Activated CD4-positive, alpha-beta T cell treated with anti-CD3 and anti-CD28 coated beads for 36 hours (primary cell): ENCODE measurements at regions of chr2 and their contacts with region 1.

Region 1: DNA sequence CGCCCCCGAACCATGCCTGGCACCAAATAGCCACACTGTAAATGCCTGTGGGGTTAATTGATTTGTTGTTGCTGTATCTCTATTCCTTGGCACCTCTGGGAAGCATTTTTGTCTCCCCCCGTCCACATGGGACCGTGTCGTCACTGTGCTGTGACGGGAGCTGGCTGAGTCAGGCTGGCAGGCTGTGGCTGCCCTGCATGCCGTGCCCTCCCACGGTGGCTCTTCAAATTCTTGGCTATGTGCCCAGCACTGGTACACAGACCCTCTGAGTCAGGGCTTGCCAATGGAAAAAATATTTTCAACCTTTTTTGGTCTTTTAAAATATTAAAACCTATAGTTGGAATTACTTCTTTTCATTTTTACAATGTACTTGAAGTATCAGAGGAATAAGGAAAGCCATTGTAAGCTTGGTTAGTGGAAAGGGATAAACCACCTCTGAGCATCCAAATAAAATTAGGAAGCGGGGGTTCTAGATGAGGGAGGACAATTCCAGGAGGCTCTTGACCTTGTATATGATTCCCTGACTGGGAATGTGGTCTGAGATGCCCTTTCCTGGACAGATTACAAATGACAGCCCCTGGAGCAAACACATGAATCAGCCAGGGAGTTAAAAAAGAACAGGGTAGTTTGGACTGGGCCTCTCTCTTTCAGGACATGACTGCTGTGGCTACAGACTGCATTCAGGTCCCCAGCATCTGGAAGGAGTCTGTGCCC is 59.4 kb downstream of the DGKD start:
- DNase-seq: peak; percentile 81
- ATAC-seq: peak; percentile 48
- H3K4me3 Mint-ChIP-seq: no peak overlapping the region
- H3K27ac Mint-ChIP-seq: peak overlapping the region; percentile 95
- H3K4me1 Mint-ChIP-seq: peaks cover 89% of the 10 kb centered on the region
- H3K27me3 Mint-ChIP-seq: no peaks in the 10 kb centered on the region

Region 2: DNA sequence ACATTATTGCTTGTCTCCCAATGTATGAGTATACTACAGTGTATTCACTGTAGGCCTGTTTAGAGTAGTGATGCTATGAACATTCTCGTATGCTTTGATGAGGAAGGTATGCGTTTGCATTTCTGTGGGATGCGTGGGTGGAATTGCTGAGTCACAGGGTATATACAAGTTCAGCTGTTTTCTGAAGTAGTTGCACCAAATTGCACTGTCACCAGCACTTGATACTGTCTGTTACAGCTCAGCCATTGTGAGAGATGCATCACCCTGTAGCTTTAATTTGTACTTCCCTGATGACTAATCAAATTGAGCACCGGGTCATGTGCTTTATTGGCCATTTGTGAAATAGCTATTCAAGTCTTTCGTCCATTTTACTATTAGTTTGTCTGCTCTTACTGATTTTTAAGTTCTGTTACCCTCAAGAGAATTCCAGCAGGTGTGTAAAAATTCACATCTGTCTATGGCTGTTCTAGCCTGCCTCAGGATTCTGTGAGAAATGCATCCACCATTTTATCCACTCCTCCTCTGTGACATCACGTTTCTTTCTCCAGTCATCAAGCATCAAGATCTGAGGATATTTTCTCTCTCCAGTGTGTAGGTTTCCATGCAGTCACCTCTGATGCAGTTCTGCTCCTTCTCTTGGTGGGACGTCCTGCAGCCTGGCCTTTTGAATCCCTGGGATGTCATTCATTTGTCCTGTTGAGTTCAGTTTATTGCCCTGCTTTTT is 13.1 kb after region 1 on chr2:
- CTCF ChIA-PET with region 1: interaction called, 16 read pairs
- POLR2A ChIA-PET with region 1: interaction called, 3 read pairs
- intact Hi-C with region 1: loop called (anchors 1 kb)
- DNase-seq: peak; percentile 89
- ATAC-seq: peak; percentile 83
- H3K4me3 Mint-ChIP-seq: no peak overlapping the region
- H3K27ac Mint-ChIP-seq: peak overlapping the region; percentile 73
- H3K4me1 Mint-ChIP-seq: peaks cover 79% of the 10 kb centered on the region
- H3K27me3 Mint-ChIP-seq: no peaks in the 10 kb centered on the region

Region 3: DNA sequence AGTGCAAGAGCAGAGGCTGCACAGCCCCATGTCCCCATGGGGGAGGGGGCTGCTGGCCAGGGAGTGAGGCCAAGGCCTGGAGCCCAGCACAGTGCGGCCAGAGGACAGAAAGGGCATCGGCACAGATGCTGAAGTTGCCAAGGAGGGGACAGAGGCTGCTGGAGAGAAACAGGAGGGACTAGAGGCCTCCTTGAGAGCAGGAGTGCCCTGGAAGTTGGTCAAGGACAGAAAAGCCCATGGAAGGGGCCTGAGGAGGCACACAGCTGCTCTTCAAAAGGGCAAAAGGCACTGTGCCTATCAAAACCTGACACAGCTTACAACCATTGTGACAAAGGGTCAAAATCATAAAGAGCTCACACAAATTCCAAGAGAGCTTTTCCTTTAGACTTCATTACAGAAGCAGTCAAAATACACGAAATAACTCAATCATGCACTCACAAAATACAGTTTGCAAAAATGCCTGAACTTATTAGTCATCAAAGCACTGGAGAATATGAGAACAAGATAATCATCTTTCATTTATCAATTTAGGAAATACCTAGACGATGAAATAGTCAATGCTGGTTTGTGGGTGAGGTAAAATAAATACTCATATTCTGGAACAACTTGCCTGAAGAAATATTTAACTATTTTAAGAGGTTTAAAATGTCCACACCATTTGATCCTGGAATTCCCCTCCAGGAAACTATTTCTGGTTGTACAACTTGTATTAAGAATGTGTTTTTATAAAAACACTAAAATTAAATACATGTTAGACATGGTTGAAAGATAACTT is 73.2 kb after region 1 on chr2:
- CTCF ChIA-PET with region 1: no interaction called
- POLR2A ChIA-PET with region 1: no interaction called
- intact Hi-C with region 1: no loop called
- DNase-seq: no peak
- ATAC-seq: no peak
- H3K4me3 Mint-ChIP-seq: no peak overlapping the region
- H3K27ac Mint-ChIP-seq: no peak overlapping the region
- H3K4me1 Mint-ChIP-seq: no peaks in the 10 kb centered on the region
- H3K27me3 Mint-ChIP-seq: no peaks in the 10 kb centered on the region

Region 4: DNA sequence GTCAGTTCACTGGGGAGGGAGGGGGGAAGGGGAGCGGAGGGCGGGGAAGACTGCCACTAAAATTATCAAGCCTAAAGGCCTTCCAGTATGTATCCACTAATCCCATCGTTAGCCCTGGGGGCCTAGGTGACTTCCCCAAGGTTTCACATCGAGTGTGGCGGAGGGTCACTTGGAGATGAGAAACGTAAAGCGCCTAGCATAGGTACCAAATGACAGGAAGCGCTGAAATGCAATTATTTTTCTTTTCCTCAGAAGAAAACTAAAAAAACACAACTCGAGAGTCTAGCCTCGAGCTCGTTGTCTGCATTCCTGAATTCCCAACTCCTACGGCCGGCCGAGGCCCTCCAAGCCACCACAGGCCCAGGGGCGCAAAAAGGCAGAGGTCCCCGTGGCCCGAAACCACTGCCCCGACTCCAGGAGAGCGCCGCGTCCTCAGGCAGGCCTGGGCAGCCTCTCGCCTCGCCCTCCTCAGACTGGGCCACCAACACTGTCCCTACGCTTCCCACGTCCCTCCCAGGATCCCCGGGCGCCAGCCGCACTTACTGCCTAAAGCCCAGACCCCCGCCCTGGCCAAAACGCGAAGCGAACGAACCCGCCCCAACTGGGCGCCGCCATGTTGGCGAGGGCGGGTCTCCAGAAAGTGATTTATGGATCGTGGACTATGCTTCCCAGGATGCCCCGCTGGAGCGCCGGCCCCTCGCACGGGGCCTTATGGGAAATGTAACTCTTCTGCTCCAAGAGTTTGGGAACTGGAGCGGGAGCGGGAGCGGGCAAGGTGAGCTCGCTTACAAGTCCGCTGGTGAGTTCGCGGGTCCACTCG is 152.6 kb after region 1 on chr2 and contains the start of gene USP40:
- CTCF ChIA-PET with region 1: interaction called, 3 read pairs
- POLR2A ChIA-PET with region 1: no interaction called
- intact Hi-C with region 1: loop called in 1 of 2 experiments (anchors 2 kb)
- DNase-seq: peak; percentile 72
- ATAC-seq: peak; percentile 83
- H3K4me3 Mint-ChIP-seq: peak within 1 kb of the TSS; percentile 90
- H3K27ac Mint-ChIP-seq: peak within 1 kb of the TSS; percentile 97
- H3K4me1 Mint-ChIP-seq: peaks cover 6% of the 10 kb centered on the region
- H3K27me3 Mint-ChIP-seq: no peaks in the 10 kb centered on the region
- total RNA-seq, gene USP40: 12.0 to 12.9 TPM